PC-3 (cell line): ENCODE measurements at regions of chr4 and their contacts with region 1.

Region 1: DNA sequence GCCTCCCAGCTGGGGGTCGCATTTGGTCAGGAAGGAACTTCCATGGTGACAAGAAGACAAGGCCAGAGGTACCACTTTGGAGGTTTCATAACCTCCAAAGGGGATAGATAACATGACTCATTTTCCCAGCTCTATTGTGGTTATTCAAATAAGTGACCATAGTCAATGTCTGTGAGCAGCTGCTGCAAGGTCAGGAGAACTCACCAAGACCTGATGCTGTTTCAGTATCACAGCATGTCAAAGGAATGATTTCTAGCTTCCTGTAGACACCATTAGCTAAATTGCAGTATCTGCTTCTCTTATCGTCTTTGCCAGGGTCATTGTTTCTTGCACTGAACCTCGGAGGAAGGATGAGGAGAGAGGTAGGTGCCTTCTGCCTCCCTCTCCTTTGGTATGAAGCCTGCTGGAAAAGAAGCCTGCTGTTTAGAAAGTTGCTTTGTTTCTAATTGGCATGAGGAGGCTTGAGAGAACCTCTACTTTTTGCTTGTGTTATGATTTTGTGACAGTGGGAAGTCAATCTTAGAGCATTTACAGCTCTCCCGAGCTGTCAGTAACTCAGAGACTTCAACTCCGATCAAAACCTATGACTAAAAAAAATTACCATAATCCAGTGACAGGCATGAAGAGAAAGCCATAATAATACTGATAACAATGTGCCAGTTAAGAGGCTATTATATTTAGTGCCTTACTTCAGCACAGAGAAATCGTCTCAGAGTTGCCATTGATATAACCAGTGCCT is 38.0 kb upstream of the GATB start:
- DNase-seq: no peak
- ATAC-seq: no peak
- H3K4me3 ChIP-seq: no peak overlapping the region
- H3K27ac ChIP-seq: no peak overlapping the region
- H3K4me1 ChIP-seq: peaks cover 10% of the 10 kb centered on the region; the same call in 1 of the 2 replicates
- H3K27me3 ChIP-seq: no peaks in the 10 kb centered on the region
- CTCF ChIP-seq: no peak

Region 2: DNA sequence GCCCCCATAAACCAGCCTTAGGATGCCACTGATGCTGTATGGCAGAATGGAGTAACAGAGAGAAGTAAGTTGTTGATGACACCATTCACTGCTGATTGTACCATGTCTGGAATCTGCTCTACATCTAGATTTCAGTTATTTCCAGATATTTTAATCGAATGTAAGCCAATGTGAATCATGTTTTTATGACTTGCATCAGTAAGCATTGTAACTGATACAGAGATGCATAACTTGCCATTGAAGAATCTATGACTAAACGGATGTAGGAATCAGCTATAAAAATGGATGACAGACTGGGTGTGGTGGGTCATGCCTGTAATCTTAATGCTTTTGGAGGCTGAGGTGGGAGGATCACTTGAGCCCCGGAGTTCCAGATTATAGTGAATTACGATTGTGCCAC is 123.0 kb after region 1 on chr4:
- CTCF ChIA-PET with region 1: no interaction called
- POLR2A ChIA-PET with region 1: no interaction called
- intact Hi-C with region 1: loop called (anchors 5 kb)
- DNase-seq: peak; percentile 85
- ATAC-seq: peak; percentile 88
- H3K4me3 ChIP-seq: no peak overlapping the region
- H3K27ac ChIP-seq: peak overlapping the region; percentile 96
- H3K4me1 ChIP-seq: peaks cover 25% of the 10 kb centered on the region
- H3K27me3 ChIP-seq: no peaks in the 10 kb centered on the region
- CTCF ChIP-seq: no peak

Region 3: DNA sequence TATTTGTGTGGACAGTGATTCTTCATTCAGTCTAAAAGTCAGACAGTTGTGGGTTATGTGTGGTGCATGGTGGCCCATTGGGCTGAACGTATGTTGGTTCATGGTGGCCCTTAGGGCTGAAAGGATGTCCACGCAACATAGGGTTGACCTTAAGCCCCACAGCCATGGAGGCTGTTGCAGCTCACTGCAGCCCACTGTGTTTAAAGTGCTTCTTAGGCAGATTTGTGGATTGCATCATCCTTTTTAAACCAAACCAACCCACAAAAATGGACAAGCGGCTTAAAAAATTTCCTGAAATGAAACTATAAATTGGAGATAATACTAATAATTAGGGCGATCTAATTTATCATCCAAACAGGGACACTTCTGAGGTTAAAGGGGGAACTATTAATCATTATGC is 181.0 kb after region 1 on chr4:
- CTCF ChIA-PET with region 1: no interaction called
- POLR2A ChIA-PET with region 1: no interaction called
- intact Hi-C with region 1: no loop called
- DNase-seq: no peak
- ATAC-seq: no peak
- H3K4me3 ChIP-seq: no peak overlapping the region
- H3K27ac ChIP-seq: no peak overlapping the region
- H3K4me1 ChIP-seq: no peaks in the 10 kb centered on the region
- H3K27me3 ChIP-seq: no peaks in the 10 kb centered on the region
- CTCF ChIP-seq: no peak

Region 4: DNA sequence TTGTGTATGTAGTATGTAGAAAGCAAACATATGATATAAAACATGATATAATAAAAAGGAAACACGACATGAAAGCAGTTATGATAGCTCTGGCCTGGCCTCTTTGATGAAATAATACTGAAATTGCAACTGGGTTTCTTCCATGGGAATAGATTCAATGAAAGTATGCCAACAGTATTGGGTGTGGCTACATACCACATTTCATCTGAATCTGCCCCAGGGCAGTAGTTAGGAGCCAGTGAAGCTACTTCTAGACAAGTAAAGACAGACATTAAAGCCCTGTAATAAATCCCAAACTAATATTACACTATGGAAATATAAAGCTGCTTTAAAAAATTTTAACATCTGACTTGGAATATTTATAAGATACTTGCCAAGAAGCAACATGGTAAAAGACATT is 529.7 kb after region 1 on chr4:
- CTCF ChIA-PET with region 1: no interaction called
- POLR2A ChIA-PET with region 1: no interaction called
- intact Hi-C with region 1: no loop called
- DNase-seq: peak; percentile 85
- ATAC-seq: peak; percentile 76
- H3K4me3 ChIP-seq: no peak overlapping the region
- H3K27ac ChIP-seq: peak overlapping the region; percentile 33
- H3K4me1 ChIP-seq: peaks cover 34% of the 10 kb centered on the region
- H3K27me3 ChIP-seq: no peaks in the 10 kb centered on the region
- CTCF ChIP-seq: no peak